Heart right ventricle (tissue), 16 donors: ENCODE measurements at regions of chr3 and their contacts with region 1.

Region 1: GRCh38 chr3:149494022-149494758 is 19.7 kb downstream of the TM4SF4 start:
- DNase-seq: peak; percentile 35 to 65
- ATAC-seq: peak in 5 of 8 donors; percentile 59 to 71 (median 62)
- H3K4me3 ChIP-seq: no peak overlapping the region
- H3K27ac ChIP-seq: no peak overlapping the region
- H3K4me1 ChIP-seq: peaks cover 0 to 14% (median 0%) of the 10 kb centered on the region in 9 donors
- H3K27me3 ChIP-seq: peaks cover 0 to 20% (median 0%) of the 10 kb centered on the region in 7 donors
- CTCF ChIP-seq: peak; percentile 70 to 89 (median 80)

Region 2: GRCh38 chr3:148748283-148748682 is 745.9 kb before region 1 on chr3:
- intact Hi-C with region 1: no loop called
- DNase-seq: no peak
- ATAC-seq: no peak
- H3K4me3 ChIP-seq: no peak overlapping the region
- H3K27ac ChIP-seq: no peak overlapping the region
- H3K4me1 ChIP-seq: no peaks in the 10 kb centered on the region
- H3K27me3 ChIP-seq: no peaks in the 10 kb centered on the region
- CTCF ChIP-seq: no peak

Region 3: DNA sequence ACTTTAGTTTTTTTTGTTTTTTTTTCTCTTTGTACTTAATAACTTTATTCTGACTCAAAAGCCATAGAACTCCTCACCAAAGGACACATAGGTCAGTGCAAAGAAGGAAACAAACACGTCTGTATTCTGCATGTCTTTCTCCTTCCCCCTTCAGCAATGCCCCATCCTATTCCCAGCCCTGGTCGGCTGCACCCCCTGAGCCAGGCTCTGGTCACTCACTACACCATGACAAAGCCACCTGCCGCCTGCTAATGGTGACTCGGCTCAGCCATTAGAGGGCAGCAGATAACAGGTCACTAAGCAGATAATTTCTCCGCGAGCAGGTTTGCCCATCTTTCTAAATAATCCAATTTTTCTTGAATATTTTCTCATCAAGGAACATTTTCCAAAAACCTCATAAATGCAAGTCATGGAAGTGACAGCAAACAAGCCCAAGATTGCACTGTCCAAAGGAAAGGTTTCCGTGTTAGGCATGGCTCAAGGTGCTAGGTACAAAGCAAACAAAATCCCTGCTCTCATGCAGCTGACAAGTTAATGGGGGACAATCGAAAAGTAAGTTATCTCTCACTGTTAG is 18.1 kb after region 1 on chr3:
- intact Hi-C with region 1: no loop called
- DNase-seq: peak; percentile 40 to 62
- ATAC-seq: peak; percentile 74 to 86 (median 80)
- H3K4me3 ChIP-seq: no peak overlapping the region
- H3K27ac ChIP-seq: no peak overlapping the region
- H3K4me1 ChIP-seq: peaks cover 0 to 29% (median 13%) of the 10 kb centered on the region in 9 donors
- H3K27me3 ChIP-seq: no peaks in the 10 kb centered on the region
- CTCF ChIP-seq: peak; percentile 71 to 91 (median 87)

Region 4: GRCh38 chr3:149765762-149766334 is 271.7 kb after region 1 on chr3:
- intact Hi-C with region 1: loop called in 5 of 10 experiments (anchors 2 to 5 kb)
- DNase-seq: no peak
- ATAC-seq: no peak
- H3K4me3 ChIP-seq: no peak overlapping the region
- H3K27ac ChIP-seq: no peak overlapping the region
- H3K4me1 ChIP-seq: no peaks in the 10 kb centered on the region
- H3K27me3 ChIP-seq: peaks cover 0 to 34% (median 15%) of the 10 kb centered on the region in 7 donors
- CTCF ChIP-seq: peak in 7 of 9 donors; percentile 31 to 54 (median 42)

Region 5: DNA sequence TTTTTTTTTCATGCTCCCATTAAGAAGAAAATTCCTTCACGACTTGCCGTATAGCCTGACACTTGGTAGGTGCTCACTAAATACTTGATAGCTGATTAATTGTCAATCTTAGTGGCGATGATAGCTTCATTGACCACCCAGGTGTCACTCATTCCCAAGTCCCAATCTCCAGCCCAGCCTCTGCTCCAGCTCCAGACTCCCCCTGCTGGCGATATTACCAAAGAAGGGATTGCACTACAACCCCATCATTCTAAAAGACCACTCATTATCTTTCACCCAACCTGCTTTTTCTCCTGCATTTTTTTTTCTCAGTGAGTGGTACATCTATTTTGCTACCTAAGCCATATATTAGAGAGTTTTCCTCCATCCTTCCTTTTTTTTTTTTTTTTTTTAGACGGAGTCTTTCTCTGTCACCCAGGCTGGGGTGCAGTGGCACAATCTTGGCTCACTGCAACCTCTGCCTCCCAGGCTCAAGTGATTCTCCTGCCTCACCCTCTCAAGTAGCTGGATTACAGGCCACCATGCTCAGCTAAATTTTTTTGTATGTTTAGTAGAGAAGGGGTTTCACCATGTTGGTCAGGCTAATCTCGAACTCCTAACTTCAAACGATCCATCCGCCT is 277.6 kb after region 1 on chr3:
- intact Hi-C with region 1: loop called in 6 of 10 experiments (anchors 2 to 5 kb)
- DNase-seq: peak; percentile 18 to 60
- ATAC-seq: peak in 4 of 8 donors; percentile 56 to 67 (median 61)
- H3K4me3 ChIP-seq: no peak overlapping the region
- H3K27ac ChIP-seq: no peak overlapping the region
- H3K4me1 ChIP-seq: no peaks in the 10 kb centered on the region
- H3K27me3 ChIP-seq: peaks cover 0 to 7% (median 0%) of the 10 kb centered on the region in 7 donors
- CTCF ChIP-seq: peak; percentile 42 to 85 (median 74)